Dendritic cell treated with granulocyte-macrophage colony-stimulating factor and Interleukin-4, amounts not matched to agents 40 ng/mL and 50 ng/mL, for 4 days (primary cell): ENCODE measurements at regions of chr1 and their contacts with region 1.

Region 1: DNA sequence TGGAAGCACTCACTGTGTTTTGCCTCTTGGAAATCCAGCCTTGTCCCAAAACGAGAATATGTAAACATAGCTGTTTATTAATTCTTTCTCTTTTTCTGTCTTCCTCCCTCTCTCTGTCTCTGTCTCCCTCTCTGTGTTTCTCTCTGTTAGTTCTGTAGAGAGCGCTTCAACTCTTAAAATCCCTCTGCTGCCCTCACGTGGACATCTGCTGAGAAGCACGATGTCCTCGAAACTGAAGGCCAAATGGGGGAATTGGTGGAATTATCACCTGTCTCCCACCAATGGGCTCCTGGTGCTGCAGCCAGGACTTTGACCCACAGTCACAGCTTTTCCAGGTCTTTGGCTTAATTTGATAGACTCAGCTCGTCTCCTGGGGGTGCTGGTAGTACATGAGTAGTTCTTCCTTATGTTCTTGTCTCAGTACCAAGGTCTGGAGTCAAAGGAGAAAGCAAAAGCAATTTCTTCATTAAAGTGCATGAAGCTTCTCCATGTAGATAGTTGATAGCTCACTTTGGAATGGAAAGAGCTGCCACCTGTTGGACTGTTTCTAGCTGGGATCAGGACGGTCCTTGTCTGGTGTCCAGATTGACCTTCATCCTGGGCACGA is 5.5 kb upstream of the GBP6 start:
- H3K4me3 Mint-ChIP-seq: no peak overlapping the region
- H3K27ac Mint-ChIP-seq: no peak overlapping the region
- H3K4me1 Mint-ChIP-seq: peaks cover 26% of the 10 kb centered on the region
- H3K27me3 Mint-ChIP-seq: no peaks in the 10 kb centered on the region

Region 2: GRCh38 chr1:89085781-89086180 is 272.6 kb before region 1 on chr1:
- intact Hi-C with region 1: loop called (anchors 1 kb)
- H3K4me3 Mint-ChIP-seq: no peak overlapping the region
- H3K27ac Mint-ChIP-seq: no peak overlapping the region
- H3K4me1 Mint-ChIP-seq: peaks cover 18% of the 10 kb centered on the region
- H3K27me3 Mint-ChIP-seq: no peaks in the 10 kb centered on the region

Region 3: DNA sequence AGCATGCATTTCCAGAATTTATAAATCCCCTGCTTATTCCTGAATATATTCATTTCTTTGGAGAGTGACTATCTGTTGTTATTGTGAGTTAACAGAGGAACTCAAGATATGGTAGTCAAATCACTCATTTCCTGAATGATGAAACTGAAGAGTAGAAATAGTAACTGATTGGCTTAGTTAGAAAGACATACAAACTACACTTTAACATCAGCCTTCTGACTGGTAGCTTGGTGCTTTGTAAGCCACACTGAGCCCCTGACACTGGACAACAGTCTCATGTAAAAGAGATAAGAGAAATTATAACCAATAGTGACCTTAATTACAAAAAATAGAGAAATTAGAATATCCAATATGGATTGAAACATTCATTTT is 187.3 kb before region 1 on chr1:
- intact Hi-C with region 1: no loop called
- H3K4me3 Mint-ChIP-seq: no peak overlapping the region
- H3K27ac Mint-ChIP-seq: no peak overlapping the region
- H3K4me1 Mint-ChIP-seq: peaks cover 6% of the 10 kb centered on the region
- H3K27me3 Mint-ChIP-seq: no peaks in the 10 kb centered on the region

Region 4: DNA sequence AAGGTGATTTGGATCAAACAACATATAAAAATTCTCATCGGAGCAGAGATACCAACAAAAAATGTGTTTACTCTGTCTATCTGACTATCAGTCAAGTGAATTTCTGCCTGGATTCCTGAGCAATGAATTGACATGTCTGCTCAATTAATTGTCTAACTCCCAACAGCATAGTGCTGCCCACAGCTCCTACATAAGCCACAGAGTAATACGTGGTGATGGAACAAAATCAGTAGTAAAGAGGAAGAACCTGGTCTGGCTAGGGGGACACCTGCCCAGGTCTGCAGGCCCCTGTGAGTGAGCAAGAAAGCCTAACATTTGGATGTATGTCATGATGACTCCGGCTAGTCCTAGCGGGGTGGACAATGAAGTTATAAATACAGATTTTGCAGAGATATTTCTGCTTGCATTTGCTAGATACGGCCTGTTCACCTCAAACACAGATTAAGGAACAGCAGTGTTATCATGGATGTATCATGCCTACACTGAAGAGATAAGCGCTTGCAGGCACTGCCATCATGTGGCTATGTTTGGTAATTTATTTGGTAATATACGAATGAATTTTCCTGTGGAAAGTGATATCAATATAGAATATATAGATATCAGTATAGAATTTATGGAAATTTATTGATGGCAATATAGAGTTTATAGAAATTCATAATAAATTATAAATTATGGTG is 96.6 kb after region 1 on chr1:
- intact Hi-C with region 1: loop called (anchors 5 kb)
- H3K4me3 Mint-ChIP-seq: no peak overlapping the region
- H3K27ac Mint-ChIP-seq: no peak overlapping the region
- H3K4me1 Mint-ChIP-seq: peaks cover under 1% of the 10 kb centered on the region
- H3K27me3 Mint-ChIP-seq: peaks cover 2% of the 10 kb centered on the region